IMR-90 (cell line): ENCODE measurements at regions of chr11 and their contacts with region 1.

Region 1: DNA sequence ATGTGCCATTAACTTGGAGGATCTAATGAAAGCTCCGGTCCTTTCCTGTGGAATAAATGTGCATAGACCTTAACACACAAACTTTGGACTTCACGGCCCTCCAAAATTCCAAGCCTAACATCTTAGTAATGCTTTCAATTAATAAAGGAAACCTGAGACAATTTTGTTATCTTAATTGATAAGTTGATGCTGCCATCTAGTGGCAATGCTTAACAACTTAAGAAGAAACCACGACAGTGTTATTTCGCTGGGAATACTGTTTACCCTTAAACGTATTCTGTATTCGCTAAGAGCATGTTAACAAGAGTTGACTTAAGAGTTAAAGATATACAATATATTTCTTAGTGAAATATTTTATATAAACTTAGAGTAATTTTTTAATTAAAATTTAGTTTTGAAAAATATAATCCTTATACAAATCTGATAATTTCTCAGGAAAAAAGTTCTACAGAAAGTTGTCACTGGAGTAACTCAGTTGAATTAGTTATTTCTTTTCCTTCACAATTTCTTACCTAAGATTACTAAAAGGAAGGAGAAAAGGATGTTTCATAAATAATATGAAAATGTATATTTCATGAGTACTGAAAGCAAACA is 35.0 kb upstream of the OR9G4 start:
- DNase-seq: peak; percentile 54
- ATAC-seq: no peak
- H3K4me3 ChIP-seq: no peak overlapping the region
- H3K27ac ChIP-seq: no peak overlapping the region
- H3K4me1 ChIP-seq: no peaks in the 10 kb centered on the region
- H3K27me3 ChIP-seq: no peaks in the 10 kb centered on the region
- CTCF ChIP-seq: peak; percentile 58
- POLR2A ChIP-seq: no peak
- RAD21 ChIP-seq: peak; percentile 53

Region 2: GRCh38 chr11:55942785-55943392 is 840.7 kb before region 1 on chr11:
- CTCF ChIA-PET with region 1: no interaction called
- POLR2A ChIA-PET with region 1: no interaction called
- dilution Hi-C with region 1: no loop called
- in situ Hi-C with region 1: no loop called
- intact Hi-C with region 1: loop called (anchors 5 kb)
- DNase-seq: peak; percentile 7
- ATAC-seq: no peak
- H3K4me3 ChIP-seq: no peak overlapping the region
- H3K27ac ChIP-seq: no peak overlapping the region
- H3K4me1 ChIP-seq: no peaks in the 10 kb centered on the region
- H3K27me3 ChIP-seq: no peaks in the 10 kb centered on the region
- CTCF ChIP-seq: peak; percentile 45
- POLR2A ChIP-seq: no peak
- RAD21 ChIP-seq: peak; percentile 27

Region 3: DNA sequence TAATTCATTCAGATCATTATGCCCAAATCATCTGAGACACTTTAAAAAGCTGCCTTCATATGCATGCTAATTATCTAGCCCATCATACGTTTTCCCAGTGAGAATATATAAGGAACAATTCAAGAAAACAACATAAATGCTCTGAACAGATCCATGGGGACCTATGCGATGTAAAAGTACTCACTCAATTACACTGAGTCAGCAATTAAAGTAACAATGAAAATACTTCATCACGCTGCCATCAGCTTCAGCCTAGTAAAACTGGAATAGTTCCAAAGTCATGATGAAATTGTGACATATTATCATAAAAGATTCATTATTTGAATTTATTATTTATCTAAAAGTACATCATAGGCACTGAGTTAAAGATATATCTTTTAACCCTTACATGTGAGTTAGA is 619.7 kb before region 1 on chr11:
- CTCF ChIA-PET with region 1: no interaction called
- POLR2A ChIA-PET with region 1: no interaction called
- dilution Hi-C with region 1: no loop called
- in situ Hi-C with region 1: no loop called
- intact Hi-C with region 1: no loop called
- DNase-seq: no peak
- ATAC-seq: no peak
- H3K4me3 ChIP-seq: no peak overlapping the region
- H3K27ac ChIP-seq: no peak overlapping the region
- H3K4me1 ChIP-seq: no peaks in the 10 kb centered on the region
- H3K27me3 ChIP-seq: no peaks in the 10 kb centered on the region
- CTCF ChIP-seq: no peak
- POLR2A ChIP-seq: no peak
- RAD21 ChIP-seq: no peak